ENCODE measurements at regions of chr6 and their contacts with region 1.

Region 1: DNA sequence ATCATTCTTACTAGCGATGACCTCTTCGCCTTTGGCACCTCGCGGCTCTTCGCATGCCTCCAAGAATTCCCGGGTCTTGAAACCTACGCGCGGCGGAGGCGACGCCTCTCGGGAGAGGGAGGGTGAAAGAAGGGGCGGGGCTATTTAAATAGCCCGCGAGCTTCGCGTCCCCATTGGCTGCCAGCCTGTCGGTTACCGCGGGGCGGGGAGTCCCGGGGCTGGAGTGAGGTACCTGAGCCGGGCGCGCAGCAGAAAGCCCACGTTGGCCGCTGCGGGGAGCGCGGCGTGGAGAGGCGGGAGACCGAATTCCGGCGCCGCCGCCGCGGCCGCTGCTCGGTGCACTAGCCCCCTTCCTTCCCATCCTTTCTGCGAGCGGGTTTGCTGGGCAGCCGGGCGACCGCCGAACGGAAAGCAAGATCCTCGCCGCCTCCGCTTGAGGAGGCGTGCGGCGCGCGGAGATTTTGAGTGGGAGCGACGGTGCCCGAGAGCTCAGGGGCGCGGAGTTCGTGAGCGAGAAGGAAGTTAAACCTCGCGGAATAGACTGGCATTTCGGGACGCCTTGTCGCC is at the start of gene BMP6:
- DNase-seq: peak; percentile 95
- H3K4me3 ChIP-seq: peak within 1 kb of the TSS; percentile 70 to 94 (median 73)
- H3K27ac ChIP-seq: peak within 1 kb of the TSS; percentile 59
- H3K4me1 ChIP-seq: peaks cover 30% of the 10 kb centered on the region
- H3K27me3 ChIP-seq: no peaks in the 10 kb centered on the region
- CTCF ChIP-seq: peak in 1 of 2 donors; percentile 6
- POLR2A ChIP-seq: peak; percentile 99
- total RNA-seq, gene BMP6: 221 and 234 TPM in 2 replicates

Region 2: DNA sequence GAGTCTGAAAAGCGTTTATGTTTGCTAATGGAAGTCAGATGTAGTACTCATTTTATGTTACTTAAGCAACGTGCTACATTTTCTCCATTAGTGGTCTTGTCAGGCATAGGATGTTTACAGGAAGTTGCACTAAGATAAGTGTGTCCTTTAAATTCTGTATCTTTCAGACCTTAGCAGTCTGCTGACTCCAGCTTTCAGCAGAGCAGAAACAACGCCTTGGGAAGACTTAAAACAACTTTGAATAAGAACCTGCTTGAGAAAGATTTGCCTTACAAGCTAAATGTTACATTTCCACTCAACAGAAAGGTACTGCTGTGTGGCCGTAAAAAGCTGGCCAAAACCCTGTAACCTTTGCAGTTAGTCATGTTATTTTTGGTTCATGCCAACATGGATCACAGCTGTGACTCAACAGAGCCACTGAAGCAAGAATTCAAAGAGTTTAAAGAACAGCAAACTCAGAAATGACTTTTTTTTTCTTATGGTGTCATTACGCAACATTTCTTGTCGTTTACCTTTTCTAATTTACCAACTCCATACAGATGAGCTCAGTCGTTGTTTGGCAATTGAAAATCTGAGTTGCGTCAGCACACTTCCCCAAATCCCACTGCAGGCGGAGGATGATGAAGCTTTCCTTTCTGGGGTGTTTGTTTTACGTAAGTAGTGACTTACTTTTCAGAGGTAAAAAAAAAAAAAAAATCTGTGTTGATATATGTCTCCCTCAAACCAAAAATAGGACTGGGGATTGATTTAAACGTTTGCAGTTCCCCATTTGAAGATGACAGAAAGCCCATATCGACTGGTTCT is 27.9 kb before region 1 on chr6:
- CTCF ChIA-PET with region 1: interaction called, 10 read pairs
- POLR2A ChIA-PET with region 1: no interaction called
- dilution Hi-C with region 1: no loop called
- intact Hi-C with region 1: no loop called
- DNase-seq: peak; percentile 90
- H3K4me3 ChIP-seq: peak overlapping the region in 1 of 3 experiments; percentile 43
- H3K27ac ChIP-seq: peak overlapping the region; percentile 59
- H3K4me1 ChIP-seq: peaks cover 16% of the 10 kb centered on the region
- H3K27me3 ChIP-seq: no peaks in the 10 kb centered on the region
- CTCF ChIP-seq: no peak
- POLR2A ChIP-seq: no peak

Region 3: GRCh38 chr6:7846966-7847818 is 121.3 kb after region 1 on chr6:
- CTCF ChIA-PET with region 1: interaction called, 14 read pairs
- POLR2A ChIA-PET with region 1: no interaction called
- dilution Hi-C with region 1: no loop called
- intact Hi-C with region 1: loop called (anchors 1 kb)
- DNase-seq: peak; percentile 74
- H3K4me3 ChIP-seq: no peak overlapping the region
- H3K27ac ChIP-seq: peak overlapping the region; percentile 35
- H3K4me1 ChIP-seq: peaks cover 37% of the 10 kb centered on the region
- H3K27me3 ChIP-seq: no peaks in the 10 kb centered on the region
- CTCF ChIP-seq: peak; percentile 29 to 43
- POLR2A ChIP-seq: peak; percentile 25

Region 4: DNA sequence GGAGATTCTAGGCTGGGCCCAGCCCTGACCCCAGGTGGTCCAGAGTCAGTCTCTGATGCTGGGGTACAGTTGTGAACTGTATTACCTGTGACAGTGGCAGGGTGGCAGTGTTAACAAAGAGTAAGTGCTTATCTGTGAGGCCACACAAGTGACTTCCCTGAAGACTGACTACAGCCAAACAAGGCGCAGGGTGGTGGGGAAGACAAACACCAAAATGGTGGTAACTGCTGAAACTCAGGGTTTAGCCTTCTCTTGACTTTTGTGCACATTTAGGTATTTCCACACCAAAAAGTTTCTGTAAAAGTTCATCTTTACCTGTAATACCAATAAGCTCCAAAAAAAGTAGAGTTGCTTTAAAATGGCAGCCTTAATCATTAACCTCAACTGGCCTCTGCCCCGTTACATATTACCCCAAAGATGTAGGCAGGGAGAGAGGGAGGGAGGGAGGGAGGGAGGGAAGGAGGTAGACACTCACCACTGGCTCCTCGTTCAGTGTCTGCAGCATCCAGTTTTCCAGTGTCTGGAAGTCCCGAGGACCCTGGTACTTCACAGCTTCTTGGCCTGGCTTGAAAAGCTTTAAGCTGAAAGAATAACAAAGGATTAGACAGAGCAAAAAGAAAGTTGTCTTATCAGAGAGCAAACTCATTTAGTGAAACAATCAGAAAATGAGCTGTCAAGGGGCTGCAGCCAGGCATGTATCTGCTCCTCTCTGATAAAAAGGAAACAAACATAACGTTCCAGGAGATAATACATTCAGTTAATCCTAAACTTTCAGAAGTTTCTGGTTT is 173.4 kb after region 1 on chr6:
- CTCF ChIA-PET with region 1: interaction called, 17 read pairs
- POLR2A ChIA-PET with region 1: interaction called, 4 read pairs
- dilution Hi-C with region 1: no loop called
- intact Hi-C with region 1: no loop called
- DNase-seq: peak; percentile 40
- H3K4me3 ChIP-seq: no peak overlapping the region
- H3K27ac ChIP-seq: peak overlapping the region; percentile 36
- H3K4me1 ChIP-seq: peaks cover 94% of the 10 kb centered on the region
- H3K27me3 ChIP-seq: no peaks in the 10 kb centered on the region
- CTCF ChIP-seq: no peak
- POLR2A ChIP-seq: peak; percentile 27

Region 5: DNA sequence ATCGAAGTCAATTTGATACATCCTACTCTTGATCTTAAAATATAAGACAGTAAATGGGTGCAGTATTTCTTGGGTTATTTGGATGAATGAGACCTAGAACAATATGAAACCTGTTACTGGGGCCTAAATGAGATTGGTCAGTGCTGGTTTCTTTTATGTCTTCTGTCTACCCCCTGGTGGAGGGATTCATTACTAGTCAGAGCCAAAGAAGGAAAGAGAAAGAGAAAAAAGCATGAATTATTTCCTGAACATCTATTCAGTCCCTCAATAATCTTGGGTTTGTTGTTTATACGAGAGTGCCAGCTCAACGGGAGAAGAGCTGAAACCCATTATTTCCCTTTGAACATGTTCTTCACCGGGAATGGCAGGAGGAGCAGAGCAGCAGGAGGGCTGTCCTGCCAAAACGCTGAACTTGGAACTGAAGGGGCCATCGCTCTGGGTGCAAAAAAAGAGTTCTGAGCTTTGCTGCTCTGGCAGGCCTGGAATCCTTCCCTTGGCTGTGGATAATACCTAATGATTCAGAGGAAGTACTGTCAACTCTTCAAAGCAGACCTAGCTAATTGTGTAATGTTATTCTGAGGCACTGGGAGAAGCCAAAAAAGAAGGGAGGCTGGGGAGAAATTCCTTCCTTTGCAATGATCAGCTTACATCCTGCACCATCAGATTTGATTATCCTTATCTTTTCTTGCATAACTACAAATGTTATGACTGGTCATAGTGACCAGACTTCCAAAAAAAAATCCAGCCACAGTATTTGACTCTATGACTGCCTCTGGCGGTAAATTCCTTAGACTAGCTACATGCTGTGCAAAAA is 266.3 kb after region 1 on chr6:
- CTCF ChIA-PET with region 1: interaction called, 35 read pairs
- POLR2A ChIA-PET with region 1: interaction called, 6 read pairs
- dilution Hi-C with region 1: no loop called
- intact Hi-C with region 1: no loop called
- DNase-seq: peak; percentile 96
- H3K4me3 ChIP-seq: peak overlapping the region in 1 of 3 experiments; percentile 31
- H3K27ac ChIP-seq: peak overlapping the region; percentile 99
- H3K4me1 ChIP-seq: peaks cover 49% of the 10 kb centered on the region
- H3K27me3 ChIP-seq: no peaks in the 10 kb centered on the region
- CTCF ChIP-seq: peak; percentile 41 to 45
- POLR2A ChIP-seq: peak; percentile 70

Region 6: DNA sequence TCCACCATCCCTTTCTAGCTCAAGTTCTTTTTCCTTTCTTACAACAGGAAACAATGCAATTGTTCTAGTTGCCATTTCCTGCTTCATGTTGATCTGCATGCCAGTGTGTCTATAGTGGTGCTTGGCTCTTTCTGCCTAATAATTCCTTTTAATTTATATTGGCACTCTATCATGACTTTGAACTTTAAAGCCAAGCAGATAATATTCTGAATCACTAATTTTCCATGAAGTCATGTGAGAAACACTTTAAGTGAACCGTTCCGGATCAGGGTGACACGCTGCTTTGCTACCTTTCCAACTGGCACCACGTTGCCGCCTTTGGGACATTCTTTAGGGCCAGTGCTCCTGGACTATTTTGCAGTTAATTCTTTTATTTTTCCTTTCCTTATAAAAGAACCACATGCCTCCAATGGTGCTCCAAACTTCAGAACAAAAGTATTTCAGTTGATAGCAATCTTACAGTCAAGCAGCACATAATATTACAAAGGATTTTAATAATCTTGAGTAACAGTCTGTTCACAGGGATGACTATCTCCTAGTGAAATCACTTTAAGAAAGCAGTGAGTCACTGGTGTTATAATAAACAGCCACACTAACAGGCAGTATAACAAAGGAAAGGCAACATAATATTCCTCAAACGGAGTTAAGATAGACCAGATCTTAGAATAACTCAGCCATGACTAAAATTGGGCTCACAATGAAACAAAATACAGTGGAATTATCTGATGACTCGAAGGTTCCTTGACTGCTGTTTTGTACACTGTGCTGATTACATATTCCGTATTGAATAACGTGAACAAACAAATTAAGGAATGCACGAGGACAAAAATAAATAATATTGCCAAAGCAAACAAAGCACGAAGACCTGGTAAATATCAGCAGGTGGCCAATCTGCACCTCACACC is 357.3 kb after region 1 on chr6:
- CTCF ChIA-PET with region 1: interaction called, 6 read pairs
- POLR2A ChIA-PET with region 1: no interaction called
- dilution Hi-C with region 1: no loop called
- intact Hi-C with region 1: loop called (anchors 5 kb)
- DNase-seq: peak; percentile 95
- H3K4me3 ChIP-seq: peak overlapping the region in 1 of 3 experiments; percentile 16
- H3K27ac ChIP-seq: peak overlapping the region; percentile 93
- H3K4me1 ChIP-seq: peaks cover 64% of the 10 kb centered on the region
- H3K27me3 ChIP-seq: no peaks in the 10 kb centered on the region
- CTCF ChIP-seq: no peak
- POLR2A ChIP-seq: no peak

Region 7: GRCh38 chr6:8157839-8158238 is 431.9 kb after region 1 on chr6:
- CTCF ChIA-PET with region 1: no interaction called
- POLR2A ChIA-PET with region 1: no interaction called
- dilution Hi-C with region 1: no loop called
- intact Hi-C with region 1: no loop called
- DNase-seq: no peak
- H3K4me3 ChIP-seq: no peak overlapping the region
- H3K27ac ChIP-seq: no peak overlapping the region
- H3K4me1 ChIP-seq: no peaks in the 10 kb centered on the region
- H3K27me3 ChIP-seq: peaks cover 2 to 6% of the 10 kb centered on the region in 2 experiments
- CTCF ChIP-seq: no peak
- POLR2A ChIP-seq: no peak

Measured in endothelial cell of umbilical vein (primary cell).